PC-3 (cell line): ENCODE measurements at regions of chr5 and their contacts with region 1.

Region 1: GRCh38 chr5:148912714-148913398 is 86.4 kb downstream of the ADRB2 start:
- DNase-seq: peak; percentile 100
- ATAC-seq: peak; percentile 62
- H3K4me3 ChIP-seq: peak overlapping the region; percentile 19; the same call in 1 of the 2 replicates
- H3K27ac ChIP-seq: peak overlapping the region; percentile 88
- H3K4me1 ChIP-seq: peaks cover 80% of the 10 kb centered on the region
- H3K27me3 ChIP-seq: no peaks in the 10 kb centered on the region
- CTCF ChIP-seq: peak; percentile 97

Region 2: GRCh38 chr5:148523139-148523538 is 389.7 kb before region 1 on chr5:
- CTCF ChIA-PET with region 1: no interaction called
- POLR2A ChIA-PET with region 1: no interaction called
- intact Hi-C with region 1: no loop called
- DNase-seq: peak; percentile 44
- ATAC-seq: peak; percentile 86
- H3K4me3 ChIP-seq: no peak overlapping the region
- H3K27ac ChIP-seq: no peak overlapping the region
- H3K4me1 ChIP-seq: no peaks in the 10 kb centered on the region
- H3K27me3 ChIP-seq: peaks cover 83% of the 10 kb centered on the region
- CTCF ChIP-seq: peak; percentile 59

Region 3: GRCh38 chr5:148559461-148559860 is 353.4 kb before region 1 on chr5:
- CTCF ChIA-PET with region 1: no interaction called
- POLR2A ChIA-PET with region 1: no interaction called
- intact Hi-C with region 1: no loop called
- DNase-seq: no peak
- ATAC-seq: no peak
- H3K4me3 ChIP-seq: no peak overlapping the region
- H3K27ac ChIP-seq: no peak overlapping the region
- H3K4me1 ChIP-seq: no peaks in the 10 kb centered on the region
- H3K27me3 ChIP-seq: peaks cover 89% of the 10 kb centered on the region
- CTCF ChIP-seq: no peak

Region 4: GRCh38 chr5:148864113-148864841 is 48.6 kb before region 1 on chr5:
- CTCF ChIA-PET with region 1: no interaction called
- POLR2A ChIA-PET with region 1: no interaction called
- intact Hi-C with region 1: loop called (anchors 2 kb)
- DNase-seq: no peak
- ATAC-seq: peak; percentile 51
- H3K4me3 ChIP-seq: no peak overlapping the region
- H3K27ac ChIP-seq: no peak overlapping the region
- H3K4me1 ChIP-seq: no peaks in the 10 kb centered on the region
- H3K27me3 ChIP-seq: no peaks in the 10 kb centered on the region
- CTCF ChIP-seq: no peak

Region 5: GRCh38 chr5:148939676-148940075 is 26.8 kb after region 1 on chr5:
- CTCF ChIA-PET with region 1: interaction called, 5 read pairs
- POLR2A ChIA-PET with region 1: interaction called, 4 read pairs
- intact Hi-C with region 1: loop called (anchors 1 kb)
- DNase-seq: peak; percentile 100
- ATAC-seq: peak; percentile 90
- H3K4me3 ChIP-seq: no peak overlapping the region
- H3K27ac ChIP-seq: peak overlapping the region; percentile 81
- H3K4me1 ChIP-seq: peaks cover 23% of the 10 kb centered on the region
- H3K27me3 ChIP-seq: no peaks in the 10 kb centered on the region
- CTCF ChIP-seq: no peak

Region 6: GRCh38 chr5:148957591-148958202 is 44.8 kb after region 1 on chr5:
- CTCF ChIA-PET with region 1: interaction called, 30 read pairs
- POLR2A ChIA-PET with region 1: interaction called, 4 read pairs
- intact Hi-C with region 1: loop called (anchors 1 kb)
- DNase-seq: peak; percentile 86
- ATAC-seq: no peak
- H3K4me3 ChIP-seq: no peak overlapping the region
- H3K27ac ChIP-seq: no peak overlapping the region
- H3K4me1 ChIP-seq: peaks cover 49% of the 10 kb centered on the region
- H3K27me3 ChIP-seq: no peaks in the 10 kb centered on the region
- CTCF ChIP-seq: peak; percentile 100

Region 7: DNA sequence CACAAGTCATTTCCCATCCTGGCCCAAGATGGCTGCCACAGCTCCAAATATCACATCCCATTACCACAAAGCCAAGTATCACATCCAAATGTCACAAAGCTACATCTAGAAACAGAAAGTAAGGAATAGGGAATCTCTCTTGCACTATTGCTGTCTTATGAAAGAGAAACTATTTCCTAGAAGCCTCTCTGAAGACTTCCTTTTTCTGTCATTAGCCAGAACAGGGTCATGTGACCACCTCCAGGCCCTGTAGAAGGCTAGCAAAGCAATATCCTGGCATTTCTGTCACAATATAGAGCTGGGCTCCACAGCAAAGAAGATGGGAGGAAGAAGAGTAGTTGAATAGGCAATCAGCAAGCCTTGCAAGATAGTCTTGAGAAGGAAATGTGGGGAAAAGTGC is 50.8 kb after region 1 on chr5:
- CTCF ChIA-PET with region 1: interaction called, 7 read pairs
- POLR2A ChIA-PET with region 1: interaction called, 4 read pairs
- intact Hi-C with region 1: loop called (anchors 1 kb)
- DNase-seq: no peak
- ATAC-seq: no peak
- H3K4me3 ChIP-seq: no peak overlapping the region
- H3K27ac ChIP-seq: peak overlapping the region; percentile 79; the same call in 1 of the 2 replicates
- H3K4me1 ChIP-seq: peaks cover 81% of the 10 kb centered on the region
- H3K27me3 ChIP-seq: no peaks in the 10 kb centered on the region
- CTCF ChIP-seq: no peak